ENCODE measurements at regions of chr15 and their contacts with region 1.

Region 1: GRCh38 chr15:45795440-45796069 is 160.7 kb downstream of the SQOR start:
- DNase-seq: no peak
- H3K4me3 ChIP-seq: no peak overlapping the region
- H3K27ac ChIP-seq: no peak overlapping the region
- H3K4me1 ChIP-seq: no peaks in the 10 kb centered on the region
- H3K27me3 ChIP-seq: no peaks in the 10 kb centered on the region
- CTCF ChIP-seq: peak; percentile 29 to 63 (median 47)

Region 2: DNA sequence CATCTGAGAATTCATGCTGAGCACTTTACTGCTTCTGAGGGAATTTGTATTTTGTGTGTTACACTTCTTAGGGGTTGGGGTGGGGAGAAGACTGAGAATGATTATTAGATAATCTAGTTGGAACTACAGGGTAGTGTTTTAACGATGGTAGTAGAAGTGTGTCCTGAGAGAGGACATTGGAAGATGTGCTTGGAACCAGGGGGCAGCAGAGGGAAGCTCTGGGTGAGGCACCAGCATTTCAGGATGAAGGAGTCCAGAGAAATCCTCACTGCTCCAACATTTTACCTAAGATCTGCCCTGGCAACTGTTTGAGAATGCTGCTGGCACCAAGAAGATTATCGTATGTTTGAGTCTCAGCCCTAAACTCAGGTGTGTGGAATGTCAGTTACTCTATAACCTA is 15.2 kb before region 1 on chr15:
- intact Hi-C with region 1: no loop called
- DNase-seq: no peak
- H3K4me3 ChIP-seq: no peak overlapping the region
- H3K27ac ChIP-seq: no peak overlapping the region
- H3K4me1 ChIP-seq: no peaks in the 10 kb centered on the region
- H3K27me3 ChIP-seq: no peaks in the 10 kb centered on the region
- CTCF ChIP-seq: no peak

Region 3: GRCh38 chr15:46304320-46304719 is 508.8 kb after region 1 on chr15:
- intact Hi-C with region 1: loop called (anchors 10 kb)
- DNase-seq: no peak
- H3K4me3 ChIP-seq: no peak overlapping the region
- H3K27ac ChIP-seq: no peak overlapping the region
- H3K4me1 ChIP-seq: no peaks in the 10 kb centered on the region
- H3K27me3 ChIP-seq: no peaks in the 10 kb centered on the region
- CTCF ChIP-seq: peak in 1 of 3 experiments; percentile 21